Activated CD8-positive, alpha-beta T cell treated with anti-CD3 and anti-CD28 coated beads for 36 hours (primary cell): ENCODE measurements at regions of chr9 and their contacts with region 1.

Region 1: DNA sequence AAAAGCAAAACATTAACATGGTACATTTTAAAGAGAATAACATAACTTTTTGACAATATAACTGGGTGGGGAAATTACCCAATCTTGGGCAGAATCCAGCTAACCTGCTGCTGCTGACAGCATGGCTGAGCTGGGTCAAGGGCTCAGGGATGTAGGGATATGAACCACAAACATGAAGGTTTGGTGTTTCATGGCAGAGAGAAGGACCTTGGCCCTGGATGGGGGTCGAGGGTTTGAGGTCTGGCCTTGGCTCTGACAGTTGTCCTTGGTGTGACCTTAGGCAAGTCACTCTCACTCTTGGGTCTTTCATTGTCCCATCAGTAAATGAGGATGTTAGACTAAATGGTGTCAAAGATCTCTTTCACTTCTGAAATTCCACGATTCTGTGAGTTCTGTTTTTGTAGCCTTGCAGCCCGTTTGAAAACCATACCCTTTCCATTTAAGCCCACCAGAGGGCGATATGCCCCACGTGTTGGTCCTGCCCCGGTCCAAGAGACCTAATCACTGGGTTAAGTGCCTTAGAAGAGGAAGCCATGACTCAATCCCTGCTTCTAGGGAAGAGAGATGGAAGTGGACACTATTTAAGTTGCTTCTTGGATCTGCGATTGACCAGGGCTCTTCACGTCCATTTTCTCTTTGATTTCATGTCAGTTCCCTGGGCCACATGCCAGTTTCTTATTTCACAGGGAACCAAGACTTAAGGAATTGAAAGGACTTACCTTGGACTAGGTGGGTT is 56.8 kb upstream of the TEX48 start:
- DNase-seq: peak; percentile 80
- ATAC-seq: peak; percentile 71
- H3K4me3 Mint-ChIP-seq: no peak overlapping the region
- H3K27ac Mint-ChIP-seq: peak overlapping the region; percentile 94
- H3K4me1 Mint-ChIP-seq: peaks cover 53% of the 10 kb centered on the region
- H3K27me3 Mint-ChIP-seq: no peaks in the 10 kb centered on the region
- CTCF ChIP-seq: peak; percentile 75

Region 2: GRCh38 chr9:114580698-114581097 is 158.1 kb before region 1 on chr9:
- CTCF ChIA-PET with region 1: no interaction called
- POLR2A ChIA-PET with region 1: no interaction called
- intact Hi-C with region 1: no loop called
- DNase-seq: no peak
- ATAC-seq: no peak
- H3K4me3 Mint-ChIP-seq: no peak overlapping the region
- H3K27ac Mint-ChIP-seq: no peak overlapping the region
- H3K4me1 Mint-ChIP-seq: no peaks in the 10 kb centered on the region
- H3K27me3 Mint-ChIP-seq: no peaks in the 10 kb centered on the region
- CTCF ChIP-seq: no peak

Region 3: GRCh38 chr9:114606597-114607207 is 132.0 kb before region 1 on chr9:
- CTCF ChIA-PET with region 1: no interaction called
- POLR2A ChIA-PET with region 1: no interaction called
- intact Hi-C with region 1: no loop called
- DNase-seq: no peak
- ATAC-seq: no peak
- H3K4me3 Mint-ChIP-seq: no peak overlapping the region
- H3K27ac Mint-ChIP-seq: no peak overlapping the region
- H3K4me1 Mint-ChIP-seq: peaks cover 11% of the 10 kb centered on the region
- H3K27me3 Mint-ChIP-seq: no peaks in the 10 kb centered on the region
- CTCF ChIP-seq: no peak

Region 4: DNA sequence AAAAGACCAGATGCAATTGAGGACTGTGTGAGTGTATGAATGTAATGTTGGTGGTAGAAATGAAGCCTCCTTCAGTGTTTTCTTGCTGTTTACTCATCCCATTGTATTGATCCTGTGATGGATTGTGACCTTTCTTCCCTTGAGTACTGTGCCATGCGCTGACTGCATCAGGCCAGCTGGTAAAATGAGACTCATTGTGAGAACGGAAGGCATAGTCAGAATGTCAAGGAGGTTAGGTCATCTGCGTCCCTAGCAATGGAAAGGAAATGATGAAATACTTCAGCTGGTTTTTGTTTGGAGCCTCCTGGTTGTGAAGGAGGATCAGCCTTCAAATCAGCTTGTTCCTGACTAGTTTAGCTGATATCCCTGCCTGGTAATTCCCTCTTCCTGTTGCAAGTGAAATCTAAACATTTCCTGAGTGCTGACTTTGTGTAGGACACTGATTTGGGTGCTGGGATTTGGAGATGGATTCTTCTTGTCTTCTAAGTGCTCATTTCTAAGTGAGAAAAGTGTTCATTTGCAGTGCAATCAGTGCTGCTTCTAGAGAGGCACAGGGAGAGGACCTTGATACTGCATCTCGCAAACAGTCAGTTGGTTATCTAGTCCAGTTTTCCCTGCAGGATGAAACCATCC is 156.2 kb after region 1 on chr9:
- CTCF ChIA-PET with region 1: interaction called, 13 read pairs
- POLR2A ChIA-PET with region 1: interaction called, 4 read pairs
- intact Hi-C with region 1: no loop called
- DNase-seq: peak; percentile 78
- ATAC-seq: peak; percentile 65
- H3K4me3 Mint-ChIP-seq: no peak overlapping the region
- H3K27ac Mint-ChIP-seq: peak overlapping the region; percentile 86
- H3K4me1 Mint-ChIP-seq: peaks cover 54% of the 10 kb centered on the region
- H3K27me3 Mint-ChIP-seq: no peaks in the 10 kb centered on the region
- CTCF ChIP-seq: no peak

Region 5: GRCh38 chr9:114938687-114939575 is 200.2 kb after region 1 on chr9:
- CTCF ChIA-PET with region 1: no interaction called
- POLR2A ChIA-PET with region 1: no interaction called
- intact Hi-C with region 1: no loop called
- DNase-seq: no peak
- ATAC-seq: peak; percentile 51
- H3K4me3 Mint-ChIP-seq: peak overlapping the region; percentile 4
- H3K27ac Mint-ChIP-seq: peak overlapping the region; percentile 44
- H3K4me1 Mint-ChIP-seq: peaks cover 19% of the 10 kb centered on the region
- H3K27me3 Mint-ChIP-seq: no peaks in the 10 kb centered on the region
- CTCF ChIP-seq: no peak

Region 6: DNA sequence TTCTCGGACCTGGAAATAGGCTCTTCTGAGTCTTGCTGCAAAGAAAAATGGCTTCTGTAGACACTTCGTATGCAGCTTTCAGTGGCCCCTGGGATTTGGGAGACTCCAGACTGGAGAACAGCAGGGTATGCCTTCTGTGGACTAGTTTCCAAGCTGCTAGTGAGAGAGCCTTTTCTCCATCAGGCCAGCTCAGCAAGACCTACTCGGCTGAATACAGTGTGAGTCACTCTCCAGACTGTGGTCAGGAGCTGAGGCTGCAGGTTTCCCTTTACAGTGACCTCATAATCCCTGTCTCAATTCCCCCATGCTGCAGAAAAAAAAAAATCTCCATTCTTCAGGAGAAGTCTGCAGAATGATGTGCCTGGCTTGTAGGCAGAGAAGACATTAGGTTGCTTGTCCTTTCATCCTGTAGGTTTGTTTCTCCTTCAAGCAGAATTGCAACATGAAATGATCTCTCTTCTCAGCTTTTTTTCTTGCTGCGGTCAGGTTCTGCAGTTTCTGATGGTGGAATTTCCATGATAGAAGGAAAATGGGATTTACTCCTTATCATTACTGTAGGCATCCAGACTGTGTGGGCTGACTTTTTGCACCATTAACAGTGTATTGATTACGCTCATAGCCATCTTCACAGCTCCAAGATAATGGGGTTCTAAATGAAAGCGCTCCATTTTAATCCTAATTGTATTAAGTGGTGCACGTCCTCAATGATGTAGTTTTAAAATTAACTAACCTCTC is 270.0 kb after region 1 on chr9:
- CTCF ChIA-PET with region 1: interaction called, 31 read pairs
- POLR2A ChIA-PET with region 1: interaction called, 4 read pairs
- intact Hi-C with region 1: loop called (anchors 1 kb)
- DNase-seq: peak; percentile 38
- ATAC-seq: peak; percentile 48
- H3K4me3 Mint-ChIP-seq: no peak overlapping the region
- H3K27ac Mint-ChIP-seq: no peak overlapping the region
- H3K4me1 Mint-ChIP-seq: peaks cover 63% of the 10 kb centered on the region
- H3K27me3 Mint-ChIP-seq: no peaks in the 10 kb centered on the region
- CTCF ChIP-seq: no peak